ENCODE measurements at regions of chr10 and their contacts with region 1.

Region 1: GRCh38 chr10:20962165-20962564 is 65.1 kb upstream of the NEBL start:
- DNase-seq: peak; percentile 69
- H3K4me3 Mint-ChIP-seq: no peak overlapping the region
- H3K27ac Mint-ChIP-seq: peak overlapping the region; percentile 85
- H3K4me1 Mint-ChIP-seq: peaks cover 20% of the 10 kb centered on the region
- H3K27me3 Mint-ChIP-seq: no peaks in the 10 kb centered on the region
- CTCF ChIP-seq: no peak

Region 2: GRCh38 chr10:19310066-19310465 is 1652.1 kb before region 1 on chr10:
- CTCF ChIA-PET with region 1: no interaction called
- POLR2A ChIA-PET with region 1: no interaction called
- intact Hi-C with region 1: no loop called
- DNase-seq: no peak
- H3K4me3 Mint-ChIP-seq: no peak overlapping the region
- H3K27ac Mint-ChIP-seq: no peak overlapping the region
- H3K4me1 Mint-ChIP-seq: no peaks in the 10 kb centered on the region
- H3K27me3 Mint-ChIP-seq: no peaks in the 10 kb centered on the region
- CTCF ChIP-seq: no peak

Region 3: DNA sequence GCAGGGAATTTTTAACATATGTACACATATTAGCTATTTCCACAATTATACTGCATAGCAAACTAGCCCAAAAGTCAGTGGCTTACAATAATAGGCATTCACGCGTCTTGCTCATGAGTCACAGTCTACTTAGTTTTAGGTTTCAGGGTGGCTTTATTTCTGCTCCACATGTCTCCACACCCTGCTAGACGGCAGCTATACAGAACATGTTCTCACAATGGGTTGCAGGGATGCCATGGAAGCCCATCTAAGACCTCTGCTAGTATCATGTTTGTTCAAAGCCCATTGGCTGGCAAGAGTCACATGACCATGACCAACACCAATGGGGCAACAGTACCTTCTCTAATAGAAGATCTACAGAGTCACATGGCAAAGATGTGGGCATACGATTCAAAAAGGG is 31.2 kb after region 1 on chr10:
- CTCF ChIA-PET with region 1: no interaction called
- POLR2A ChIA-PET with region 1: interaction called, 13 read pairs
- intact Hi-C with region 1: no loop called
- DNase-seq: peak; percentile 74
- H3K4me3 Mint-ChIP-seq: no peak overlapping the region
- H3K27ac Mint-ChIP-seq: peak overlapping the region; percentile 21
- H3K4me1 Mint-ChIP-seq: peaks cover 30% of the 10 kb centered on the region
- H3K27me3 Mint-ChIP-seq: no peaks in the 10 kb centered on the region
- CTCF ChIP-seq: no peak

Region 4: GRCh38 chr10:21002097-21002878 is 40.1 kb after region 1 on chr10:
- CTCF ChIA-PET with region 1: interaction called, 4 read pairs
- POLR2A ChIA-PET with region 1: interaction called, 13 read pairs
- intact Hi-C with region 1: no loop called
- DNase-seq: peak; percentile 88
- H3K4me3 Mint-ChIP-seq: peak overlapping the region; percentile 57
- H3K27ac Mint-ChIP-seq: peak overlapping the region; percentile 87
- H3K4me1 Mint-ChIP-seq: peaks cover 40% of the 10 kb centered on the region
- H3K27me3 Mint-ChIP-seq: no peaks in the 10 kb centered on the region
- CTCF ChIP-seq: no peak

Measured in MCF 10A (cell line).